CD4-positive, alpha-beta memory T cell (primary cell): ENCODE measurements at regions of chr2 and their contacts with region 1.

Region 1: DNA sequence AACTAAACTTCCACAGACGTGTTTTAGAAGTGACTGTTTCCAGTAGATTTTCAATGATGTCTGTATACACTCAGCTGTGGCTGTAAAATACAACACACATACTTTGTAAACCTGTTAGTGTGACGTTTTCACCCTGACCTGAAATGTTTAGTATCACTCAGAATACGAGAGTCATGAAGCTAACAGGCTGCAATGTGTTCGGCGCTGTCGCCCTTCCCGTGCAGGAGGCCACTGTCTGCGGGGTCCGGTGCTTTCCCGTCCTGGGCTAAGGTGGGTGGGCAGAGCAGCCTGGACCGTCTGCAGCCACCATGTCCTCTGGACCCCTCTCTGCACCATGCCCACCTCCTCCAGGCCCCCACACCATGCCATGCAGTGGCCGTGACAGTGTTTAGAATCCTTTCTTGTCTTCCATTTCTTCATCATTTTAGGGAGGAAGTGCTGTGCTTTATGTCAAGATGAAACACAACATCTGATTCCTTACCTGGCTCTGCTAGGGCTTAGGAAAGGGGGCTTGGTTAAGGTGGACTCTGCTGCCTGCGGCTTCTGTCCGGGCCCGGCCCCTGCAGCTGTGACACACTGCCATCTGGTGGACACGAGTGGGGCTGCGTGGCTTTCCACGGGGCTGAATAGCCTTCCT is 53.8 kb upstream of the RBM44 start:
- DNase-seq: peak; percentile 67 to 78 (median 73)
- H3K4me3 ChIP-seq: no peak overlapping the region
- H3K4me3 Mint-ChIP-seq: peak overlapping the region in 1 of 8 donors; percentile 3
- H3K27ac ChIP-seq: peak overlapping the region; percentile 35
- H3K27ac Mint-ChIP-seq: peak overlapping the region; percentile 85 to 95 (median 92)
- H3K4me1 ChIP-seq: peaks cover 32% of the 10 kb centered on the region
- H3K4me1 Mint-ChIP-seq: peaks cover 32 to 61% (median 42%) of the 10 kb centered on the region in 4 donors
- H3K27me3 ChIP-seq: no peaks in the 10 kb centered on the region
- H3K27me3 Mint-ChIP-seq: no peaks in the 10 kb centered on the region

Region 2: DNA sequence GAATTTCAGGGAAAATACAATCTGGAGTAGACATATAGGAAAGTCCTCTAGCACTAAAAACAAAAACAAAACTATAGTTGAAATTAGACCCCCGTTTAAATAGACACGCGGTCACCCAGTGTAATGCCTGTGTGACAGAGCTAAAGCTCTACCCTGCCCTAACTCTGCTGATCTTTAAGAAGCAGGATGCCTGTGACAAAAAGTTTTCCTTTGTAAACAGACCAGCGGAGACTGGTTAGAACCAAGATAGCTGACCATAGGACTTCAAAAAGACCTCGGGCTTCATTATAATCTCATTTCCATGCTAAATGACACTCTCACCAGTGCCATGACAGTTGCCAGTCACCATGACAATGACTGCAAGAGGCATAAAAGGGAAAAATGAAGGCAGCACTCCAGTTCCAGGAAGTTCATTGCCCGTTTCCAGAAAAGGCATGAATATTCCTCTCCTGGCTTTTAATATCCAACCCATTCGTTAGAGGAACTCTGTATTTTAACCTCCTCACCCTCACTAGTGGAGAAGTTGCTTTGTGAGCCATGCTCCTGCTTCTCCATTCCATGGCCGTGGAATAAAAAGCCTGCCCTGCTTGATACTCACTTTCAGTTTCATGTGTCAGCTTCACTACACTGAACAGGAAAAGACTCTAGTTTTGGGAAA is 816.2 kb before region 1 on chr2:
- CTCF ChIA-PET with region 1: no interaction called
- POLR2A ChIA-PET with region 1: no interaction called
- intact Hi-C with region 1: no loop called
- DNase-seq: no peak
- H3K4me3 ChIP-seq: no peak overlapping the region
- H3K4me3 Mint-ChIP-seq: peak overlapping the region; percentile 41 to 85 (median 74)
- H3K27ac ChIP-seq: no peak overlapping the region
- H3K27ac Mint-ChIP-seq: peak overlapping the region in 2 of 7 donors; percentile 37 to 68
- H3K4me1 ChIP-seq: peaks cover 7% of the 10 kb centered on the region
- H3K4me1 Mint-ChIP-seq: peaks cover 0 to 3% (median 0%) of the 10 kb centered on the region in 4 donors
- H3K27me3 ChIP-seq: peaks cover 4% of the 10 kb centered on the region
- H3K27me3 Mint-ChIP-seq: peaks cover 3 to 17% of the 10 kb centered on the region in 2 donors

Region 3: GRCh38 chr2:237512774-237513466 is 231.8 kb before region 1 on chr2:
- CTCF ChIA-PET with region 1: interaction called, 16 read pairs
- POLR2A ChIA-PET with region 1: interaction called, 6 read pairs
- intact Hi-C with region 1: loop called (anchors 2 kb)
- DNase-seq: peak; percentile 64 to 74 (median 70)
- H3K4me3 ChIP-seq: no peak overlapping the region
- H3K4me3 Mint-ChIP-seq: no peak overlapping the region
- H3K27ac ChIP-seq: no peak overlapping the region
- H3K27ac Mint-ChIP-seq: no peak overlapping the region
- H3K4me1 ChIP-seq: no peaks in the 10 kb centered on the region
- H3K4me1 Mint-ChIP-seq: no peaks in the 10 kb centered on the region
- H3K27me3 ChIP-seq: no peaks in the 10 kb centered on the region
- H3K27me3 Mint-ChIP-seq: peaks cover 0 to 3% of the 10 kb centered on the region in 2 donors

Region 4: DNA sequence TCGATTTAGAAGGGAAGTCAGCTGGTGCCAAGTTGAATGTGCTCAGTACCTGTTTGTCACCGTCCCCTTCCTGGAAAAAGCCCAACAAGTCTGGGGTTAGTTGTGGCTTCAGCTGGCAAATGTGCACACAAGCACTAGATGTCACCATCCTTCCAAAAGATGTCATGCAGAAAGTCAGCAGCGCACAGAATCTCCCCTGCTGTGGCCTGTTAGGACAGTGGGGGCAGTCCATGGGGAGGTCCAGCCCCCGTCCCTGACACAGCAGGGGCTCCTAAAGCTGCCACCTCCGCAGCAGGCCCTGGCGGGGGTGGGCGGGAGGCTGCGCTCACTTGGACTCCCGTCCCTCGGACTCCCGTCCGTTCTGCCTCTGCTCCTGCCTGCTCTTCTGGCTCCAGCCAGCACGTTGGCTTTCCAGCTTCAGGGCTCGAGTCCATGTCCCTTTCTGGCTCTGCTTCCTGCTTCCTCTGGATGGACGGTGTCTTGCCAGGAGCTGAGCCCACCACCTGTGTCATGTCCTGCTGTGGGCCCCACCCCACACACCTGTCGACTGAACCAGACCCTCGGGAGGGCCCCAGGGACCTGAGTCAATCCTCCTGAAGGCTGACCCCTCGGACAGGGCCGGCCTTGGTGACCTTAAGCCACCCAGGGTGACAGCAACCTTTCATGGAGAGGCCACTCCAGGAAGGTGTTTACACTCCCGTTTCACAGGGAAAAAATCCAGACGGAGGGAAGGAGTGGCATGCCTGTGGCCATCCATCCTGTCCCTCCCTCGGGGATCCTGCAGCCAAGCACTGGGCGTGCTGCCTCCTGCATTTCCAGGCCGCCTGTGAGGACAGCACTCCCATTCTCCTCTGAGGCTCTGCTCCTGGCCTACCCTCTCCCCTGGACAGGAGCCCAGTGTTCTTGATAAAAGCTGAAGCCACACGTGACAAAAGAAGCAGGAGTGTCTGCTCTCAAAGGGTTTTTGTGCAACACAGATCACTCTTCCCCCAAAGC is 162.7 kb before region 1 on chr2:
- CTCF ChIA-PET with region 1: interaction called, 12 read pairs
- POLR2A ChIA-PET with region 1: no interaction called
- intact Hi-C with region 1: loop called (anchors 1 kb)
- DNase-seq: peak in 4 of 5 donors; percentile 33 to 49 (median 40)
- H3K4me3 ChIP-seq: no peak overlapping the region
- H3K4me3 Mint-ChIP-seq: no peak overlapping the region
- H3K27ac ChIP-seq: no peak overlapping the region
- H3K27ac Mint-ChIP-seq: peak overlapping the region in 3 of 7 donors; percentile 25 to 36 (median 29)
- H3K4me1 ChIP-seq: no peaks in the 10 kb centered on the region
- H3K4me1 Mint-ChIP-seq: peaks cover 0 to 4% (median under 1%) of the 10 kb centered on the region in 4 donors
- H3K27me3 ChIP-seq: no peaks in the 10 kb centered on the region
- H3K27me3 Mint-ChIP-seq: peaks cover 0 to 1% of the 10 kb centered on the region in 2 donors

Region 5: GRCh38 chr2:237685408-237685807 is 59.3 kb before region 1 on chr2:
- CTCF ChIA-PET with region 1: interaction called, 154 read pairs
- POLR2A ChIA-PET with region 1: interaction called, 11 read pairs
- intact Hi-C with region 1: no loop called
- DNase-seq: no peak
- H3K4me3 ChIP-seq: no peak overlapping the region
- H3K4me3 Mint-ChIP-seq: no peak overlapping the region
- H3K27ac ChIP-seq: no peak overlapping the region
- H3K27ac Mint-ChIP-seq: peak overlapping the region in 6 of 7 donors; percentile 60 to 100 (median 100)
- H3K4me1 ChIP-seq: peaks cover 46% of the 10 kb centered on the region
- H3K4me1 Mint-ChIP-seq: peaks cover 42 to 61% (median 48%) of the 10 kb centered on the region in 4 donors
- H3K27me3 ChIP-seq: no peaks in the 10 kb centered on the region
- H3K27me3 Mint-ChIP-seq: no peaks in the 10 kb centered on the region

Region 6: DNA sequence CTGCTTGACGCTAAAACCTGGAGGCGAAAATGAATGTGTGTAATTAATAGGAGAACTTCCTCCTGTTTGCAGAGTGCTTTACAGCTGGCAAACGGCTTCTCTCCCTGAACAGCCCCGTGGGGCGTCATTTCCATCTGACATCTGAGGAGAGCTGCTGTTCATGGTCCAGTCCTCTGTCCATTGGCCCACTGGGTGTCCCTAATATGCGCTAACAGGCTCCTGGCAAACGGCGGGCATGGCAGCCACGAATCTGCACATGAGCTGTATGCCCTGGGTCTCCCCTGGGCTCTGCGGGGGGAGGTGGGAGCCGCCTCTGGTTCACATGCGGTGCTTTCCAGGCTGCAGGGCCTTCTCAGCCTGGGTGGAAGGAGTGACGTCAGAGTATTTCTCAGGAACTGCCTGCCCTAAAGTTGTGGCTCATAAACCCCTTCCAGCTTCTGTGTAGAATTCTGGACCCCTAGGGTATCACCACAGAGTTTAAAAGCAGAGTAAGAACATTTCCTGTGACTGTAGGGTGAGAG is 44.2 kb before region 1 on chr2:
- CTCF ChIA-PET with region 1: interaction called, 154 read pairs
- POLR2A ChIA-PET with region 1: interaction called, 17 read pairs
- intact Hi-C with region 1: loop called (anchors 1 kb)
- DNase-seq: peak; percentile 60 to 94 (median 66)
- H3K4me3 ChIP-seq: no peak overlapping the region
- H3K4me3 Mint-ChIP-seq: peak overlapping the region; percentile 61 to 93 (median 82)
- H3K27ac ChIP-seq: peak overlapping the region; percentile 70
- H3K27ac Mint-ChIP-seq: peak overlapping the region; percentile 90 to 96 (median 96)
- H3K4me1 ChIP-seq: peaks cover 100% of the 10 kb centered on the region
- H3K4me1 Mint-ChIP-seq: peaks cover 76 to 100% (median 93%) of the 10 kb centered on the region in 4 donors
- H3K27me3 ChIP-seq: no peaks in the 10 kb centered on the region
- H3K27me3 Mint-ChIP-seq: no peaks in the 10 kb centered on the region

Region 7: DNA sequence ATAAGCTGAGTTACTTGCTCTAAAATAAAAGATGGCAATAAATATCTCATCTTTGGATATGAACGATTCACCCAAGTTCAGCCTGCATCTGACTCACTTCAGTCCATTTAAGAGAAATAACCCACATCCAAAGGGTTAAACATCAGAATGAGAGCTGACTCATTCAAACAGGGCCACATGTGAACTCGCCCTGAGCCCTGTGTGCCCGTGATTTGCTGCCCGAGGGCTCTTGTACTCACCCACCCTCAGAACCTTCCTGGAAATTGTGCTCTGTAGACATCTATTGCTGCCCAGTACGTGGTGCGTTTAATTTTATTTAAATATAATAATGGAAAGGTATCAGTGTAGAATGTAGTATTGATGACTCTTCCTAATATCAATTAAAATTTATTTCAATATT is 13.1 kb before region 1 on chr2:
- CTCF ChIA-PET with region 1: interaction called, 97 read pairs
- POLR2A ChIA-PET with region 1: interaction called, 5 read pairs
- intact Hi-C with region 1: no loop called
- DNase-seq: peak in 1 of 5 donors; percentile 51
- H3K4me3 ChIP-seq: no peak overlapping the region
- H3K4me3 Mint-ChIP-seq: peak overlapping the region in 7 of 8 donors; percentile 46 to 83 (median 63)
- H3K27ac ChIP-seq: peak overlapping the region; percentile 24
- H3K27ac Mint-ChIP-seq: peak overlapping the region; percentile 67 to 92 (median 85)
- H3K4me1 ChIP-seq: peaks cover 60% of the 10 kb centered on the region
- H3K4me1 Mint-ChIP-seq: peaks cover 47 to 84% (median 69%) of the 10 kb centered on the region in 4 donors
- H3K27me3 ChIP-seq: no peaks in the 10 kb centered on the region
- H3K27me3 Mint-ChIP-seq: no peaks in the 10 kb centered on the region